ENCODE measurements at regions of chr15 and their contacts with region 1.

Region 1: DNA sequence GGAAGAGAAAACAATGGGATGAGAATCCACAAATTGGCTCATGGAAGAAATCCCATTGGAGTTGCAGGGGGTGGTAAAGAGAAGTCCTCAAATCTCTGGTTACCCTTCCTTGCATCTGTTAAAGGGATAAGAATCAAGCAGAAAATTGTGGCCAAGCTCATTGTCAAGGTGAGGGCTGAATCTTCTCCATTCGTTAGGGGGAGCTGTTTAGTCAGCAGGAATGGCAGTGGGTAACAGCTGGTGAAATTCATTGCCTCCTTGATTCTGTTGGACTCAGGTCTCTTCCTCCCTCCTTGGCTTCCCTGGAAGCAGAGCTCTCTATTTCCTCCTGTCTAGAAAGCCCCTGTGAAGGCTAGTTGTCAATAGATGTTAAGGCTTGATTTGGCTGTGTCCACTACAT is 343.1 kb upstream of the SEMA6D start:
- DNase-seq: peak in 1 of 2 experiments; percentile 15
- H3K4me3 ChIP-seq: no peak overlapping the region
- H3K27ac ChIP-seq: no peak overlapping the region
- H3K4me1 ChIP-seq: no peaks in the 10 kb centered on the region
- H3K27me3 ChIP-seq: no peaks in the 10 kb centered on the region
- CTCF ChIP-seq: peak; percentile 41 to 81 (median 62)
- EP300 ChIP-seq: no peak
- POLR2A ChIP-seq: no peak
- RAD21 ChIP-seq: peak; percentile 73 to 78

Region 2: GRCh38 chr15:47196057-47196456 is 178.2 kb before region 1 on chr15:
- CTCF ChIA-PET with region 1: interaction called, 23 read pairs
- POLR2A ChIA-PET with region 1: no interaction called
- DNase-seq: peak; percentile 80 to 82
- H3K4me3 ChIP-seq: peak overlapping the region in 1 of 4 experiments; percentile 10; a peak in 1 of 8 replicates
- H3K27ac ChIP-seq: no peak overlapping the region
- H3K4me1 ChIP-seq: peaks cover 0 to 9% (median 1%) of the 10 kb centered on the region in 4 experiments; a peak in 3 of 7 replicates
- H3K27me3 ChIP-seq: no peaks in the 10 kb centered on the region; a peak in 2 of 7 replicates
- CTCF ChIP-seq: peak; percentile 93 to 96 (median 96)
- EP300 ChIP-seq: no peak
- POLR2A ChIP-seq: no peak
- RAD21 ChIP-seq: peak; percentile 99 to 100

Region 3: DNA sequence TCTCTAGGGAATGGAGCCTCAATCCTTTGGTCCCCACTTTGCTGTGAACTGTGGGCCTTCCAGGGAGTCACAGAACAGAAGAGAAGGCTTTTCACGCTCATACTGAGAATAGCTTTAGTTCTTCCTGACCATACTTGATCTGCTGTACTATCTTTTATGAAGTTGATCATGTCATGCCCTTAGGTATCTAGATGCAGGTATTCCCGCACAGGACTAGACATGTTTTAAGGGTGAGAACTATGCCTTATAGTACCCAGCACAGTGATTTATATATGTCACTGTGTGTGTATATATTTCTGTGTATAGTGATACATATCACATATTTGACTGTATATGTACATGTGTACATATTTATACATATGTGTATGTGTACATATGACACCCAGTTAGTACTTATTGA is 15.3 kb before region 1 on chr15:
- CTCF ChIA-PET with region 1: interaction called, 19 read pairs
- POLR2A ChIA-PET with region 1: no interaction called
- DNase-seq: no peak
- H3K4me3 ChIP-seq: no peak overlapping the region
- H3K27ac ChIP-seq: no peak overlapping the region
- H3K4me1 ChIP-seq: no peaks in the 10 kb centered on the region
- H3K27me3 ChIP-seq: no peaks in the 10 kb centered on the region
- CTCF ChIP-seq: no peak
- EP300 ChIP-seq: no peak
- POLR2A ChIP-seq: no peak
- RAD21 ChIP-seq: no peak

Region 4: DNA sequence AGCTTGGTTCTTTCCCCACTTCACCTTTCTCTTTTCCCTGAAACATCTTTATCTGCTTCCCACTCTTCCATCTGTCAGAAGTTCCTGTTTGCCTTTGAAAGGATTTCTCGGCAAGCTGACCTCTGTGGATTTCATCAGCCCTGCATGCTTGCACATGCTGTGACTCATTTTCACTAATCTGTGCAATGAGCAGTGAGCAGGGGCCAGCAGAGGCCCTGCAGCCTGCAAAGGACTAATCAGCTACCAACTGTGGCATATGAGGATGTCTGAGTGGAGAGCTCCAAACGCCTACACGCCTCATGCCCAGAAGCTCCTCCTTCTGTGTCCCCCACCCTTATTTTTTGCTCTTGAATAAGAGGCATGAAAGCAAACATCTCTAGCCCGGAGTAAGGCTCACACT is 10.1 kb after region 1 on chr15:
- CTCF ChIA-PET with region 1: interaction called, 21 read pairs
- POLR2A ChIA-PET with region 1: no interaction called
- DNase-seq: peak in 1 of 2 experiments; percentile 7
- H3K4me3 ChIP-seq: no peak overlapping the region
- H3K27ac ChIP-seq: no peak overlapping the region
- H3K4me1 ChIP-seq: peaks cover 0 to 3% (median 0%) of the 10 kb centered on the region in 4 experiments; a peak in 1 of 7 replicates
- H3K27me3 ChIP-seq: 0 out of 7 replicates have a peak, but pooled peaks cover 0 to 3% (median 0%) of the 10 kb centered on the region in 4 experiments
- CTCF ChIP-seq: no peak
- EP300 ChIP-seq: no peak
- POLR2A ChIP-seq: no peak
- RAD21 ChIP-seq: no peak

Region 5: GRCh38 chr15:47404877-47405276 is 30.7 kb after region 1 on chr15:
- CTCF ChIA-PET with region 1: interaction called, 15 read pairs
- POLR2A ChIA-PET with region 1: no interaction called
- DNase-seq: no peak
- H3K4me3 ChIP-seq: no peak overlapping the region
- H3K27ac ChIP-seq: no peak overlapping the region
- H3K4me1 ChIP-seq: peaks cover 0 to 11% (median 3%) of the 10 kb centered on the region in 4 experiments; a peak in 3 of 7 replicates
- H3K27me3 ChIP-seq: no peaks in the 10 kb centered on the region
- CTCF ChIP-seq: peak in 1 of 3 experiments; percentile 19; a peak in 1 of 4 replicates
- EP300 ChIP-seq: no peak
- POLR2A ChIP-seq: no peak
- RAD21 ChIP-seq: no peak

Measured in H1 (cell line).